ENCODE measurements at regions of chr5 and their contacts with region 1.

Region 1: GRCh38 chr5:115841382-115842088 is at the starts of genes AP3S1 and ATG12:
- DNase-seq: peak; percentile 95
- ATAC-seq: peak; percentile 90
- H3K4me3 Mint-ChIP-seq: peak within 1 kb of the TSS; percentile 95
- H3K27ac Mint-ChIP-seq: peak within 1 kb of the TSS; percentile 100
- H3K4me1 Mint-ChIP-seq: peaks cover 49% of the 10 kb centered on the region
- H3K27me3 Mint-ChIP-seq: no peaks in the 10 kb centered on the region
- CTCF ChIP-seq: no peak
- total RNA-seq, gene AP3S1: 102 to 107 TPM
- total RNA-seq, gene ATG12: 37.2 to 37.8 TPM

Region 2: DNA sequence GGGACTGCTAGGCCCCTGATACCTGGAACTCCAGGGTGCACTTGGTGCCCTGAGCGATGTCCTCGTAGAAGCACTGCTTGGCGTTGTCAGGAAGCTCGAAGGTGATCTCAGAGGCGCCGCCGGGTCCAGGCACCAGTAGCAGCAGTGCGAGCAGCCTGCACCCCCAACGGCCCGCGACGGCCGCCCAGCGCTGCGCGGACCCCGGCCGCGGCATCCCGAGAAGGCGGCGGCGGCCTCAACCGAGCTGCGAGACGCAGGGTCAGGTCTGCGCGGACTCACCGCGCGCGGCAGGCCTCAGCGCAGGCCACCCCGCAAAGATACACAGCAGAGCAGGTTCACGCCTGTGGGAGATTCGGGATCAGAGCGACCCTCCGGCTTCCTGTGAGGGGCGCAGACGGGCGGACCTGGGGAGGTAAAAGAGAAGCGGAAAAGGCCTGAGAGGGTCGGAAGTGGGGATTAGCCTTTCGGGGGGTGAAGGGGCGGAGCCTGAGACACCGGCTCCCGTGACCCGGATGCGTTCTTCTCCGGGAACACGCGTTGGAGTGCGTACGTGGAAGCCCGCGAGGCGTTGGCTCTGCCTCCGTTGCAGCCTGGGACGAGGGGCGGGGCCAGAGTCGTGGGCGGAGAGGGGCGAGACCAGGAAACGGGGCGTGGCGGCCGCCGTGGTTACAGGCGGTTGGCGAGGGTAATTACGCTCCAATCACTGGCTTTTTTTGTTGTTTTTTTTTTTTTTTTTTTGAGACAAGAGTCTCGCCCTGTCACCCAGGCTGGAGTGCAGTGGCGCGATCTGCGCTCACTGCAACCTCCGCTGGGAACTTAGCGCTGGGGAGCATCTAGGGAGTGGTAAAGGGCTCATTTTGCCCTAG is 215.7 kb before region 1 on chr5 and contains the start of gene TMED7:
- CTCF ChIA-PET with region 1: interaction called, 11 read pairs
- POLR2A ChIA-PET with region 1: interaction called, 7 read pairs
- intact Hi-C with region 1: no loop called
- DNase-seq: peak; percentile 100
- ATAC-seq: peak; percentile 93
- H3K4me3 Mint-ChIP-seq: no peak within 1 kb of the TSS
- H3K27ac Mint-ChIP-seq: peak within 1 kb of the TSS; percentile 90
- H3K4me1 Mint-ChIP-seq: peaks cover 25% of the 10 kb centered on the region
- H3K27me3 Mint-ChIP-seq: no peaks in the 10 kb centered on the region
- CTCF ChIP-seq: no peak
- total RNA-seq, gene TMED7: 39.9 to 44.6 TPM

Region 3: DNA sequence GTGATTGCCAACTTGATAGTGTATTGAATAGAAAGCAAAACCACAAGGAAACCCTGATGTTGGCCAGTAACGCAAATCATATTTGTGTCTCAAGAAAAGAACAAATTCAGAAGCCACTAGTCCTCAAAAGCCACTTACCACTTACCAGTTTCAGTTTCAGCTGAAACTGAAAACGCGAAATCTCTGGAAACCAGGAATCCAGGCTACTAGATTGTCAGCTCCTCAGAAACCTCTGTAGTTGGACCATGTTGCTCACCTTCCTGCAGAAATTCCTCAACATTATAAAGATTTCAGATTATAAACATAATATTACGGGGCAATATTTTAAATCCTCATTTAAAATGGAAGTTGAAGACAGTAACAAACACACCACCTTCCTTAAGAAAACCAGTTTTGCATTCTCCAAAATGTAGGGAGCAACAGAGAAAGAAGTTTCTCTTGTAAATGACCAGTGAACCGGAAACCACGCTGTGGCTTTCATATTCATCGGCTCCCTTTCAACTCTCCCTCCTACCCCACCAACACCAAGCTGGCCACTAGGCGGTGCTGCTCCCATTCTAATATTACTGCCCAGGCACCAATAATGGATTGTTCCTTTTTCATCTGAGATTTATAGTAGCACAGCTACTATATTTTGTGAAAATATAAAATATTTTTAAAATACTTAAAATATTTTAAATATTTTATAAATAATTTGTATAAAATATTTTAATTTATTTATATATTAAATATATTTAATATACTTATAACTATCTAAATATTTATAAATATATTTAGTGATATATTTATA is 207.0 kb before region 1 on chr5:
- CTCF ChIA-PET with region 1: interaction called, 9 read pairs
- POLR2A ChIA-PET with region 1: no interaction called
- intact Hi-C with region 1: loop called (anchors 2 kb)
- DNase-seq: peak; percentile 95
- ATAC-seq: peak; percentile 67
- H3K4me3 Mint-ChIP-seq: peak overlapping the region; percentile 29
- H3K27ac Mint-ChIP-seq: no peak overlapping the region
- H3K4me1 Mint-ChIP-seq: peaks cover 45% of the 10 kb centered on the region
- H3K27me3 Mint-ChIP-seq: peaks cover 21% of the 10 kb centered on the region
- CTCF ChIP-seq: peak; percentile 92

Region 4: GRCh38 chr5:115857636-115858309 is 16.2 kb after region 1 on chr5:
- CTCF ChIA-PET with region 1: no interaction called
- POLR2A ChIA-PET with region 1: no interaction called
- intact Hi-C with region 1: no loop called
- DNase-seq: no peak
- ATAC-seq: peak; percentile 39
- H3K4me3 Mint-ChIP-seq: no peak overlapping the region
- H3K27ac Mint-ChIP-seq: no peak overlapping the region
- H3K4me1 Mint-ChIP-seq: peaks cover 32% of the 10 kb centered on the region
- H3K27me3 Mint-ChIP-seq: no peaks in the 10 kb centered on the region
- CTCF ChIP-seq: no peak

Region 5: DNA sequence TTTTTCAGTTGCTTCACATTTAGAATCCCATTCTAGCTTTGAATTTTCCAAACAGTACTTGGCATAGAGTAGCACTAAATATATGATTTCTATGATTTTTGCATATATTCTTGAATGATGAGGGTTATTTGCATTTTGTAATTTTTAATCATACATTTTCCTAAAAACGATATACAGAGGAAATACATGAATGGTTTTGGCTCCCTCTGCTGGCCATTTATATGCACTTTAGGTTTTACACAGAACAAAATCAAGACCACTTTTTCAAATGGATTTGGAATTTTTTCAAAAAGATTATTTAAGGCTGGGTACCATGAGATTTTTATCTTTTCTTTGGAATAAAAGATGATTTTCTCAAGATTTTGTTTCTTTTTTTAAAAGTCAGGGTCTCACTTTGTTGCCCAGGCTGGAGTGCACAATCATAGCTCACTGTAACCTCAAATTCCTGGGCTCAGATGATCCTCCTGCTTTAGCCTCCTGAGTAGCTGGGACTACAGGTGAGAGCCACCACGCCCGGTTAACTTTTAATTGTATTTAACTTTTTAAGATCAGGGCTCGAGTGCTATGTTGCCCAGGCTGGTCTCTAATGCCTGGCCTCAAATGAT is 226.6 kb after region 1 on chr5:
- CTCF ChIA-PET with region 1: no interaction called
- POLR2A ChIA-PET with region 1: no interaction called
- intact Hi-C with region 1: loop called (anchors 5 kb)
- DNase-seq: peak; percentile 63
- ATAC-seq: no peak
- H3K4me3 Mint-ChIP-seq: no peak overlapping the region
- H3K27ac Mint-ChIP-seq: no peak overlapping the region
- H3K4me1 Mint-ChIP-seq: no peaks in the 10 kb centered on the region
- H3K27me3 Mint-ChIP-seq: peaks cover 20% of the 10 kb centered on the region
- CTCF ChIP-seq: peak; percentile 80